ENCODE measurements at regions of chr10 and their contacts with region 1.

Region 1: GRCh38 chr10:103712570-103713498 is 142.5 kb downstream of the SH3PXD2A start:
- DNase-seq: peak; percentile 54 to 80 (median 69)
- ATAC-seq: peak; percentile 91
- H3K4me3 ChIP-seq: no peak overlapping the region
- H3K4me3 Mint-ChIP-seq: no peak overlapping the region
- H3K27ac ChIP-seq: no peak overlapping the region
- H3K27ac Mint-ChIP-seq: peak overlapping the region in 1 of 9 donors; percentile 25
- H3K4me1 ChIP-seq: no peaks in the 10 kb centered on the region
- H3K4me1 Mint-ChIP-seq: peaks cover 0 to 6% (median 2%) of the 10 kb centered on the region in 7 donors
- H3K27me3 ChIP-seq: no peaks in the 10 kb centered on the region
- H3K27me3 Mint-ChIP-seq: peaks cover 0 to 4% (median 0%) of the 10 kb centered on the region in 5 donors

Region 2: DNA sequence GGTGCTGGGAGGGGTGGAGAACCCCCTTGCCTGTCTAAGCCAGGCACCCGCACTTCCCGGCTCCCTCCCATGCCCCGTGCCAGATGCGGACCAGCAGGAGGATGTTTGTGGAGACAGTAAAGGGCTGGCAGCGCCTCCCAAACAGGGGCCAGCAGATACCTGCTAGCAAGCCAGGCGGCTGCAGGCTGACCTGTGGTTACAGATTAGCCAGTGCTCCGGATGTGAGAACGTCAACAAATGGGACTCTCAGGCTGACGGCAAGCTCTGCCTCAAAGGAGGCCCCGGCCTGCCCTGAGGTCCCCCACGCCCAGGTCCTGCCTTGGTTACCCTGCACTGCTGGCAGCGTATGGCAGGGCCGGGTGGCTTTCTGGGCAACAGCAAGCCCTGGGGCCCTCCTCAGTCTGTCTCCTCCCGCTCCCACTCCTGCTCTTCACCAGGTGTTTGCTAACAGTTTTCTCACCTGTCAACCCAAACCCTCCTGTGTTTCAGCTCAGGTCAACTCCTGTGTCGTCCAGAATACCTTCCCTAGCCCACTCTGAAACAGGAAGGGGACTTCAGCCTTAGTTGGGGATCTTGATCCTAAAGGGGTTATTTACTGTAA is 134.0 kb before region 1 on chr10:
- CTCF ChIA-PET with region 1: no interaction called
- POLR2A ChIA-PET with region 1: no interaction called
- intact Hi-C with region 1: no loop called
- DNase-seq: no peak
- ATAC-seq: no peak
- H3K4me3 ChIP-seq: no peak overlapping the region
- H3K4me3 Mint-ChIP-seq: no peak overlapping the region
- H3K27ac ChIP-seq: no peak overlapping the region
- H3K27ac Mint-ChIP-seq: no peak overlapping the region
- H3K4me1 ChIP-seq: peaks cover 6 to 7% of the 10 kb centered on the region in 2 donors
- H3K4me1 Mint-ChIP-seq: peaks cover 7 to 19% (median 13%) of the 10 kb centered on the region in 7 donors
- H3K27me3 ChIP-seq: no peaks in the 10 kb centered on the region
- H3K27me3 Mint-ChIP-seq: peaks cover 0 to 15% (median 0%) of the 10 kb centered on the region in 5 donors

Region 3: GRCh38 chr10:103659674-103660363 is 53.0 kb before region 1 on chr10:
- CTCF ChIA-PET with region 1: no interaction called
- POLR2A ChIA-PET with region 1: no interaction called
- intact Hi-C with region 1: no loop called
- DNase-seq: peak in 8 of 9 donors; percentile 48 to 70 (median 62)
- ATAC-seq: peak; percentile 82
- H3K4me3 ChIP-seq: peak overlapping the region; percentile 96
- H3K4me3 Mint-ChIP-seq: peak overlapping the region; percentile 83 to 94 (median 89)
- H3K27ac ChIP-seq: peak overlapping the region; percentile 92
- H3K27ac Mint-ChIP-seq: peak overlapping the region; percentile 87 to 95 (median 91)
- H3K4me1 ChIP-seq: peaks cover 4 to 6% of the 10 kb centered on the region in 2 donors
- H3K4me1 Mint-ChIP-seq: peaks cover 6 to 21% (median 13%) of the 10 kb centered on the region in 7 donors
- H3K27me3 ChIP-seq: no peaks in the 10 kb centered on the region
- H3K27me3 Mint-ChIP-seq: no peaks in the 10 kb centered on the region

Region 4: DNA sequence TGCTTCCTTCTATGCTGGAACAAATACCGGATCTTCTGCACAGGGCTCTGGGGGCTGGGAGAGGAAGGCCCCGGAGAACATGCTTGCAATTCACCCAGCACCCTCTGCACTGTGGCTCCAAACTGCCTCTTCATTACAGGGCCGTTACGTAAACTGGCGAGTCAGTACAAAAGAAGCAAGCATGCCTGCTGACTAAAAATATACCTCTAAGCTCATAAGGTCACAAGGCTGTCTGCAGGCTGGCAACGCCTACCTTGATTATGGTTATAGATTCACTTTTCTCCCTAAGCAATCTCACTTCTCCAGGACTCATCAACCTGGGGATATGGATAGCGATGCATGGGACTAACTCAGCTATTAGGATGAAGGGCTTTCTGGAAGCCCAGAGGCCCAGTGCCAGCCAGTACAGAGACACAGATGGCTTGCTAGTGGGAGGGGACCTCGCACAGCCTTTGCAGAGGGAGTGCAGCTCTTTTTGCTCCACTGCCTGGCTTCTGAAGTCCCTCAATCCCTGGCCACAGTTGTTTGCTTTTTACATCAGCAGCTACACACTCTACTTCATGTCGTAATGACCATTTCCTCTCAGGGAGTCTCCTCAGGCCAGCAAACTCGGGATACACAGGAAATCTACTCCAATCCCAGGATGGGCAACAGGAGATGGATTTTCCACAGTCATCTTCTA is 46.4 kb after region 1 on chr10:
- CTCF ChIA-PET with region 1: interaction called, 10 read pairs
- POLR2A ChIA-PET with region 1: no interaction called
- intact Hi-C with region 1: no loop called
- DNase-seq: peak in 7 of 9 donors; percentile 18 to 53 (median 39)
- ATAC-seq: peak; percentile 60
- H3K4me3 ChIP-seq: no peak overlapping the region
- H3K4me3 Mint-ChIP-seq: peak overlapping the region in 7 of 10 donors; percentile 8 to 77 (median 34)
- H3K27ac ChIP-seq: no peak overlapping the region
- H3K27ac Mint-ChIP-seq: peak overlapping the region in 5 of 9 donors; percentile 14 to 77 (median 69)
- H3K4me1 ChIP-seq: peaks cover 40 to 43% of the 10 kb centered on the region in 2 donors
- H3K4me1 Mint-ChIP-seq: peaks cover 32 to 70% (median 47%) of the 10 kb centered on the region in 7 donors
- H3K27me3 ChIP-seq: no peaks in the 10 kb centered on the region
- H3K27me3 Mint-ChIP-seq: peaks cover 0 to 30% (median 0%) of the 10 kb centered on the region in 5 donors

Region 5: GRCh38 chr10:103765981-103766380 is 53.1 kb after region 1 on chr10:
- CTCF ChIA-PET with region 1: interaction called, 10 read pairs
- POLR2A ChIA-PET with region 1: no interaction called
- intact Hi-C with region 1: loop called in 1 of 2 experiments (anchors 5 kb)
- DNase-seq: peak in 8 of 9 donors; percentile 69 to 85 (median 78)
- ATAC-seq: peak; percentile 71
- H3K4me3 ChIP-seq: peak overlapping the region; percentile 40
- H3K4me3 Mint-ChIP-seq: peak overlapping the region; percentile 47 to 87 (median 75)
- H3K27ac ChIP-seq: no peak overlapping the region
- H3K27ac Mint-ChIP-seq: peak overlapping the region in 8 of 9 donors; percentile 52 to 87 (median 72)
- H3K4me1 ChIP-seq: peaks cover 42 to 54% of the 10 kb centered on the region in 2 donors
- H3K4me1 Mint-ChIP-seq: peaks cover 45 to 86% (median 67%) of the 10 kb centered on the region in 7 donors
- H3K27me3 ChIP-seq: no peaks in the 10 kb centered on the region
- H3K27me3 Mint-ChIP-seq: peaks cover 0 to 27% (median 0%) of the 10 kb centered on the region in 5 donors

Region 6: DNA sequence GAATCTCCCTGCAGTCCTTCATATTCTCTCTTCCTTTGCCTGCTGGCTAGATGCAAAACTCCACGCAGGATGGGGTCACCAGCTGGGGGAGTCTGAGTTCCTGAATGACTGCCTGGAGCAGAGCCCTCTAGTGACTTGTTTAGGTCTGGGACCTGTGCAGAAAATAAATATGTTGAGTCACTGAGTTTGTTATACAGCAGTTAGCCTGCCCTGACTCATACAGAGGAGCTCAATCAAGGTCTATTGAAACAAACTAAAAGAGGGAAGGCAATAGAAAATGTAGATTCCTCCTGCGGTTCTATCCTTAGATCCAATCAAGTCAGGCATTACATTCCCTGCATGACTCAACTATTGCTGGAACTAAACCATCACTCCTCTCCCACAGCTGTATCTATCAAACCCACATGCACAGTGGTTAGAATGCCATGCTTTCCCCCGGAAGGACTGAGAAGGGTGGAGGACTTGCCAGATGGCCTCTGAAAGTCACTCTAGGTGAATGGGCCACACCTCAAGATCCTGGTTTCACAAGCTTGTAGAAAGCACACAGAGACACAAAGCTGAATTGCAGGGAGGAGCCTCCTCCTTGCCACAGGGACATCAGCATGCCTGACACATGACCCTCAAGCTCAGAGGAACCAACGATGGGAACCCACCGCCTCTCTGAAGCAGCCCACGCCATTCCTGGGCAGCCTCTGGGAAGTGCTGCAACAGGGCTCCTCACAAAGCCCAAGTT is 68.7 kb after region 1 on chr10:
- CTCF ChIA-PET with region 1: interaction called, 4 read pairs
- POLR2A ChIA-PET with region 1: no interaction called
- intact Hi-C with region 1: loop called in 1 of 2 experiments (anchors 5 kb)
- DNase-seq: no peak
- ATAC-seq: no peak
- H3K4me3 ChIP-seq: no peak overlapping the region
- H3K4me3 Mint-ChIP-seq: peak overlapping the region in 1 of 10 donors; percentile 33
- H3K27ac ChIP-seq: no peak overlapping the region
- H3K27ac Mint-ChIP-seq: peak overlapping the region in 1 of 9 donors; percentile 20
- H3K4me1 ChIP-seq: no peaks in the 10 kb centered on the region
- H3K4me1 Mint-ChIP-seq: peaks cover 0 to 21% (median 5%) of the 10 kb centered on the region in 7 donors
- H3K27me3 ChIP-seq: no peaks in the 10 kb centered on the region
- H3K27me3 Mint-ChIP-seq: peaks cover 0 to 27% (median 8%) of the 10 kb centered on the region in 5 donors

Region 7: DNA sequence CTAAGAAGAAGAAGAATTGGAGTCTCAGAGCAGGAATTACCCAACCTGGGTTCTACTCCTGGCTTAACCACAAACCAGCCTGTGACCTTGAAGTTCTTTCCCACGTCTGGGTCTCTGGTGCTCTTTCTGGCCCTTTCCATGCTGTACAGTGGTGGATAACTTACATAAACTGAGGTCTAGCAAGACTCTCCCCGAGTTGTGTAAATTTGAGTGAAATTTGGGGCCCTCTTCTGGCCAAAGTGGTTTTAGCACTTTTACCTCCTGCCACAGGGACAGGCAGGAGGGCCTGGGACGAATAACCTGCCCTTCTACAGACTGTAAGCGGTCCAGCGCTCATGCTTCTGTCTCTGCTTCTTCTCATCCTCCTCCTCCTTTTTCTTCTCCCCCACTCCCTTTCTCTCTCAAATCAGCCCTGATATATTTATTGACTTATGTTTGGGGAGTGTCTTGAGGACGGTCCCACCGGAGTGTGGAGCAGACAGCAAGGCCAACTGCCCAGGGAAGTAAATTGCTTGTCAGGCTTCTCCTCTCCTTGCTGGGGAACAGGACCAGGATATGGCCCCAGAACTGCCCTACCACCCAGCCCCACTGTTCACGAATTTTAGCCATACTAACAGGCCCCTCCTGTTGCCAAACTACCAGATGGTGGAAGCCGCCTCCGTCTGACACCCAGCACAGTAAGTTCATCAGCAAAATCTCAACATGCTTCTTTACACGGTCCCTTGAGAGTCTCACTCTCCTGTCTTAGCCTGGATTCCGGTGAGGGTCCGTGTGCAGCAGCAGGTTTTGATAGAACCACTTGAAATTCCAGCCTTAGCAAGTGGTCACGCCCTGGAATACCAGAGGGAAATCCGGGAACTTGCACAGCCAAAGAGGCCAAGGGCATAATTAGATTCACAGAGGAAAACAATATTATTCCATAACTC is 146.6 kb after region 1 on chr10:
- CTCF ChIA-PET with region 1: interaction called, 48 read pairs
- POLR2A ChIA-PET with region 1: interaction called, 3 read pairs
- intact Hi-C with region 1: loop called (anchors 1 kb)
- DNase-seq: peak; percentile 16 to 67 (median 46)
- ATAC-seq: peak; percentile 74
- H3K4me3 ChIP-seq: no peak overlapping the region
- H3K4me3 Mint-ChIP-seq: no peak overlapping the region
- H3K27ac ChIP-seq: no peak overlapping the region
- H3K27ac Mint-ChIP-seq: no peak overlapping the region
- H3K4me1 ChIP-seq: peaks cover 0 to 7% of the 10 kb centered on the region in 2 donors
- H3K4me1 Mint-ChIP-seq: peaks cover 3 to 13% (median 11%) of the 10 kb centered on the region in 7 donors
- H3K27me3 ChIP-seq: peaks cover 3 to 5% of the 10 kb centered on the region in 2 donors
- H3K27me3 Mint-ChIP-seq: peaks cover 12 to 58% (median 16%) of the 10 kb centered on the region in 5 donors

Region 8: DNA sequence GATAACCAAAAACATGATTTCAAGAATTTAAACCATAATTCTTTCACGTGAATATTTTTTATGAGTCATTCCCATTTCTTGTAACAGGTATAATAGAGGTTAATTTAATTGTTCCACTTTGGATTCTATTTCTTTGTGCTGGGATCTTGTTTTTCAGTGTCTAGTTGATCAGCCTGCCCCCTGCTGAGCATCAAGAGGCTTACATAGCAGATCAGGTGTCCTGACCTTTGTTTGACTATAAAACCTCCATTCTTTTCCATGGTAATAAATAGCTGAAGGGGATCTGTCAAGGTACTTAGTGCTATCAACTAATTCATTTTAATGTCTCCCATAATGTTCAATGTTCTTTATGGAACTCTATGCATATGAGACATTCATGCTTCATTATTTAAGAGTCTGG is 367.9 kb after region 1 on chr10:
- CTCF ChIA-PET with region 1: interaction called, 4 read pairs
- POLR2A ChIA-PET with region 1: no interaction called
- intact Hi-C with region 1: loop called in 1 of 2 experiments (anchors 1 kb)
- DNase-seq: peak in 5 of 9 donors; percentile 8 to 20 (median 12)
- ATAC-seq: peak; percentile 42
- H3K4me3 ChIP-seq: no peak overlapping the region
- H3K4me3 Mint-ChIP-seq: no peak overlapping the region
- H3K27ac ChIP-seq: no peak overlapping the region
- H3K27ac Mint-ChIP-seq: no peak overlapping the region
- H3K4me1 ChIP-seq: no peaks in the 10 kb centered on the region
- H3K4me1 Mint-ChIP-seq: peaks cover 0 to 4% (median 0%) of the 10 kb centered on the region in 7 donors
- H3K27me3 ChIP-seq: no peaks in the 10 kb centered on the region
- H3K27me3 Mint-ChIP-seq: peaks cover 0 to 22% (median 0%) of the 10 kb centered on the region in 5 donors

Region 9: DNA sequence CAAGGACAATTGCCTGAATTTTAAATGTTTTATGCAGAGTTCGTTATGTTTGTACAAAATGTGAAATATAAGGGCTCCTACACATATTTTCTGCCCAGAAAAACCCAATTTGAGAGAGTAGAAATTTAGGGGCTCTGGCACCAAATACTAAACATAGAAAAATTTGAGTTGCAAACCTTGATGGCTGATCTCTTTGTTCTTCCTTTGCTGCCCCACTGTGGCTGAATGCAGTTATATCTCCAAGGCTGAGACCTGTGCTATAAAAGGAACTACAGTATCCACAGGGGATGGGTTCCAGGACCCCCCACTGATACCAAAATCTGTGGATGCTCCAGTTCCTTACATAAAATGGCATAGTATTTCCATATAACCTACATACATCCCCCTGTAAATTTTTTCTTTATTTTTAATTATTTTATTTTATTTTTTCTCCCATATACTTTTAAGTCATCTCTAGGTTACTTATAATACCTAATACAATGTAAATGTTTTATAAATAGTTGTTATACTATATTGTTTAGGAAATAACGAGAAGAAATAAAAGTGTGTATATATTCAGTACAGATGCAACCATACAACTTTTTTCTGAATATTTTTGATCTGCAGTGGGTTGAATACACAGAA is 496.9 kb after region 1 on chr10:
- CTCF ChIA-PET with region 1: interaction called, 3 read pairs
- POLR2A ChIA-PET with region 1: no interaction called
- intact Hi-C with region 1: loop called (anchors 1 to 2 kb)
- DNase-seq: peak in 7 of 9 donors; percentile 20 to 52 (median 47)
- ATAC-seq: peak; percentile 70
- H3K4me3 ChIP-seq: no peak overlapping the region
- H3K4me3 Mint-ChIP-seq: no peak overlapping the region
- H3K27ac ChIP-seq: no peak overlapping the region
- H3K27ac Mint-ChIP-seq: no peak overlapping the region
- H3K4me1 ChIP-seq: no peaks in the 10 kb centered on the region
- H3K4me1 Mint-ChIP-seq: peaks cover 0 to 3% (median 0%) of the 10 kb centered on the region in 7 donors
- H3K27me3 ChIP-seq: no peaks in the 10 kb centered on the region
- H3K27me3 Mint-ChIP-seq: peaks cover 0 to 50% (median 12%) of the 10 kb centered on the region in 5 donors

Region 10: GRCh38 chr10:104254493-104255310 is 541.9 kb after region 1 on chr10 and contains the start of gene GSTO1:
- CTCF ChIA-PET with region 1: no interaction called
- POLR2A ChIA-PET with region 1: no interaction called
- intact Hi-C with region 1: no loop called
- DNase-seq: peak; percentile 28 to 59 (median 35)
- ATAC-seq: peak; percentile 71
- H3K4me3 ChIP-seq: peak within 1 kb of the TSS; percentile 83
- H3K4me3 Mint-ChIP-seq: peak within 1 kb of the TSS; percentile 84 to 100 (median 96)
- H3K27ac ChIP-seq: peak within 1 kb of the TSS; percentile 89
- H3K27ac Mint-ChIP-seq: peak within 1 kb of the TSS; percentile 85 to 97 (median 96)
- H3K4me1 ChIP-seq: peaks cover 9 to 23% of the 10 kb centered on the region in 2 donors
- H3K4me1 Mint-ChIP-seq: peaks cover 33 to 56% (median 48%) of the 10 kb centered on the region in 7 donors
- H3K27me3 ChIP-seq: no peaks in the 10 kb centered on the region
- H3K27me3 Mint-ChIP-seq: peaks cover 0 to 19% (median 0%) of the 10 kb centered on the region in 5 donors
- total RNA-seq, gene GSTO1: 28.1 to 129 (median 49.1) TPM